AG04449 (cell line): ENCODE measurements at regions of chr11 and their contacts with region 1.

Region 1: GRCh38 chr11:119144825-119145486 is 3.9 kb upstream of the ABCG4 start:
- DNase-seq: no peak
- H3K4me3 ChIP-seq: no peak overlapping the region
- CTCF ChIP-seq: peak; percentile 66

Region 2: GRCh38 chr11:119121008-119121810 is 23.7 kb before region 1 on chr11 and contains the start of gene HINFP:
- CTCF ChIA-PET with region 1: interaction called, 24 read pairs
- POLR2A ChIA-PET with region 1: no interaction called
- DNase-seq: peak; percentile 88
- H3K4me3 ChIP-seq: peak within 1 kb of the TSS; percentile 100
- CTCF ChIP-seq: no peak

Region 3: DNA sequence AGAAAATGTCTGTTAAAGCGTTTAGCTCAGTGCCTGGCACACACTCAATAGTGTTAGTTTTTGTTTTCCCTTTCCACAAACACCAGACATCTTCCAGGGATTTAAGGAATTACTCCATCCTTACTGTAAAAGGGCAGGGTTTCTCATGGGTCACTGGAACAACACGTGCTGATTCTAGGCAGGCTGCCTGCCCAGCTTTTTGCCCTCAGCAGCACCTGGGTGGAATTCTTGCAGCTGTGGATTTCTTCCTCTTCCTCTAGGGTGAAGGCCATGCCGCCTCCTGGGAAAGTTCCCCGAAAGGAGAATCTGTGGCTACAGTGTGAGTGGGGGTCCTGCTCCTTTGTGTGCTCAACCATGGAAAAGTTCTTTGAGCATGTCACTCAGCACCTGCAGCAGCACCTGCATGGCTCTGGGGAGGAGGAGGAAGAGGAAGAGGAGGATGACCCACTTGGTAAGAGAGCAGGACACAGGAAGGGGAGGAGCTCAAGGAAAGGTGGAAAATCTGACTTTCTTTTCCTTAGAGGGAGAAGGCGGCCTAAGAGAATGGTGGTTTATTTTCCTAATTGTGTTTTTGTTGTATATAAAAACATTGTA is 18.2 kb before region 1 on chr11:
- CTCF ChIA-PET with region 1: interaction called, 50 read pairs
- POLR2A ChIA-PET with region 1: no interaction called
- DNase-seq: no peak
- H3K4me3 ChIP-seq: no peak overlapping the region
- CTCF ChIP-seq: no peak

Region 4: GRCh38 chr11:119134389-119134978 is 10.5 kb before region 1 on chr11:
- CTCF ChIA-PET with region 1: interaction called, 50 read pairs
- POLR2A ChIA-PET with region 1: interaction called, 4 read pairs
- DNase-seq: no peak
- H3K4me3 ChIP-seq: no peak overlapping the region
- CTCF ChIP-seq: peak; percentile 56

Region 5: GRCh38 chr11:119155733-119156492 is 11.0 kb after region 1 on chr11:
- CTCF ChIA-PET with region 1: interaction called, 30 read pairs
- POLR2A ChIA-PET with region 1: no interaction called
- DNase-seq: no peak
- H3K4me3 ChIP-seq: no peak overlapping the region
- CTCF ChIP-seq: peak; percentile 4

Region 6: GRCh38 chr11:119168471-119169281 is 23.7 kb after region 1 on chr11 and contains the start of gene NLRX1:
- CTCF ChIA-PET with region 1: interaction called, 139 read pairs
- POLR2A ChIA-PET with region 1: no interaction called
- DNase-seq: peak; percentile 19
- H3K4me3 ChIP-seq: peak within 1 kb of the TSS; percentile 70
- CTCF ChIP-seq: peak; percentile 93